ENCODE measurements at regions of chr10 and their contacts with region 1.

Region 1: GRCh38 chr10:14185316-14186045 is 145.2 kb downstream of the FRMD4A start:
- DNase-seq: peak; percentile 86
- H3K4me3 ChIP-seq: no peak overlapping the region
- H3K27ac ChIP-seq: peak overlapping the region; percentile 91
- H3K4me1 ChIP-seq: peaks cover 10% of the 10 kb centered on the region
- H3K27me3 ChIP-seq: no peaks in the 10 kb centered on the region
- CTCF ChIP-seq: no peak

Region 2: GRCh38 chr10:13787015-13787421 is 398.5 kb before region 1 on chr10:
- CTCF ChIA-PET with region 1: no interaction called
- POLR2A ChIA-PET with region 1: no interaction called
- intact Hi-C with region 1: loop called (anchors 5 kb)
- DNase-seq: peak; percentile 56
- H3K4me3 ChIP-seq: no peak overlapping the region
- H3K27ac ChIP-seq: no peak overlapping the region
- H3K4me1 ChIP-seq: peaks cover 7% of the 10 kb centered on the region
- H3K27me3 ChIP-seq: no peaks in the 10 kb centered on the region
- CTCF ChIP-seq: no peak

Region 3: GRCh38 chr10:14173706-14174594 is 11.5 kb before region 1 on chr10:
- CTCF ChIA-PET with region 1: interaction called, 4 read pairs
- POLR2A ChIA-PET with region 1: interaction called, 19 read pairs
- intact Hi-C with region 1: no loop called
- DNase-seq: peak; percentile 10
- H3K4me3 ChIP-seq: peak overlapping the region; percentile 33
- H3K27ac ChIP-seq: no peak overlapping the region
- H3K4me1 ChIP-seq: no peaks in the 10 kb centered on the region
- H3K27me3 ChIP-seq: peaks cover 64% of the 10 kb centered on the region
- CTCF ChIP-seq: no peak

Region 4: DNA sequence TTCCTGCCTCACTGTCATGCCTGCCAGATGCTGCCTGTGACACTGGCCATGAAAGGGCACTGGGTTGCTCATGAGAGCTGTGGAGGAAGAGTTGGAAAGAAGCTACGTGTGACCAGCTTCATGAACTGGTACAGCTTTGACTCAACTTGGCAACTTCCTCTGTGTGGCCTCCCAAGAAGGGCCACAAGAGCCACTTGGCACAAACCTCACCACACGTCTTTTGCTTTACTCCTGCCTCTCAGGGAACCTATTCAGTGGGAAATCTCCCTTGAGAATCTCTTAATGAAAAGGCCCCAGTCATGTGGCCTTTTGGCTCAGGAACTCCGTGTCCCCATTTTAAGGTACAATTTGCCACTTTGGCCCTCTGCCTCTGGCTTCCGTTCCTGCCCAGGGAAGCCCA is 90.7 kb after region 1 on chr10:
- CTCF ChIA-PET with region 1: no interaction called
- POLR2A ChIA-PET with region 1: no interaction called
- intact Hi-C with region 1: no loop called
- DNase-seq: no peak
- H3K4me3 ChIP-seq: no peak overlapping the region
- H3K27ac ChIP-seq: no peak overlapping the region
- H3K4me1 ChIP-seq: no peaks in the 10 kb centered on the region
- H3K27me3 ChIP-seq: peaks cover 33% of the 10 kb centered on the region
- CTCF ChIP-seq: no peak

Region 5: DNA sequence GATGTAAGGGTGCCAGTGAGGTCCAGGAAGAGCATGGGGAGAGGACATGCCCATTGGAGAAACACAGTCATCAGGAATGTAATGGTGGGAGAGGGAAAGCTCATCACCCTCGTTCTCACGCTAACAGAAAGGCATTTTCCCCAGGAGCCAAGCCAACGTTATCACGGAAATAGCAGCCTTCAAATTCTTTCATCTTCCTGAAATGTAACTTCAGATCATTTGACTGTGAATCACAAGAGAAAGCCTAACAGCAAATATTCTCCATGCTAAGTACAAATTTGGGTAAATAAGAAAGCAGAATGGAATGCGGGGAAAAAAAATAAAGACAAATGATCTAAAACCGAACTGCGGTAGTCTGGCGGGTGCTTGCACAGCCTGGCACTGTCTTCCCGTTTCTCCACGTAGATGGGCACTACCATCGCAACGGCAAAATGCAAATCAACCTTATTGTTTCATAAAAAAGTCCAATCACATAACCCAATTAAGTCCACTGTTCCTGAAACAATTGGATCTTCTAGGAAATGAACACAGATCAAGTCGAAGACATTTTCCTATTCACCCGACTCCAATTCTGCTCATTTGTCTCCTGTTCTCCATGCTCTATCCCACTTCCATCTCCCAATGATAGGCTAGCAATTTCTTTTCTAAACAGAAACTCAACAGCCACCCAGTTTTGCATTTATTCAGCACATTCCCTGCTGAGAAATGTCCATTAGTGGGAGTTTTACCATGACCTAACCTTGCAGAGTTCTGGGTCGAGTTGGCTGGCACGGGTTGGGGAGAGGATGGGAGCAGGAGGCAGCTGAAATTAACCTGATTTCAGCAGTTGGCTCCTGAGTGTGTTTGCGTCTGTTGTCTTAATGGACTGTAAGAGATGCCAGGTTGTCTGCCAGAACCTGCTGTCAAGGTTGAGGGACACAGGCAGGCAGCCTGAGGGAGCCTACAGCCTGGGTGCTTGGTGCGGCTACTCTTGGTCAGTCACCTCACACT is 219.9 kb after region 1 on chr10:
- CTCF ChIA-PET with region 1: no interaction called
- POLR2A ChIA-PET with region 1: no interaction called
- intact Hi-C with region 1: no loop called
- DNase-seq: no peak
- H3K4me3 ChIP-seq: no peak overlapping the region
- H3K27ac ChIP-seq: no peak overlapping the region
- H3K4me1 ChIP-seq: peaks cover 39% of the 10 kb centered on the region
- H3K27me3 ChIP-seq: no peaks in the 10 kb centered on the region
- CTCF ChIP-seq: no peak

Region 6: GRCh38 chr10:14891151-14891550 is 705.7 kb after region 1 on chr10:
- CTCF ChIA-PET with region 1: no interaction called
- POLR2A ChIA-PET with region 1: no interaction called
- intact Hi-C with region 1: no loop called
- DNase-seq: no peak
- H3K4me3 ChIP-seq: no peak overlapping the region
- H3K27ac ChIP-seq: no peak overlapping the region
- H3K4me1 ChIP-seq: peaks cover 9% of the 10 kb centered on the region
- H3K27me3 ChIP-seq: no peaks in the 10 kb centered on the region
- CTCF ChIP-seq: no peak